ENCODE measurements at regions of chr12 and their contacts with region 1.

Region 1: DNA sequence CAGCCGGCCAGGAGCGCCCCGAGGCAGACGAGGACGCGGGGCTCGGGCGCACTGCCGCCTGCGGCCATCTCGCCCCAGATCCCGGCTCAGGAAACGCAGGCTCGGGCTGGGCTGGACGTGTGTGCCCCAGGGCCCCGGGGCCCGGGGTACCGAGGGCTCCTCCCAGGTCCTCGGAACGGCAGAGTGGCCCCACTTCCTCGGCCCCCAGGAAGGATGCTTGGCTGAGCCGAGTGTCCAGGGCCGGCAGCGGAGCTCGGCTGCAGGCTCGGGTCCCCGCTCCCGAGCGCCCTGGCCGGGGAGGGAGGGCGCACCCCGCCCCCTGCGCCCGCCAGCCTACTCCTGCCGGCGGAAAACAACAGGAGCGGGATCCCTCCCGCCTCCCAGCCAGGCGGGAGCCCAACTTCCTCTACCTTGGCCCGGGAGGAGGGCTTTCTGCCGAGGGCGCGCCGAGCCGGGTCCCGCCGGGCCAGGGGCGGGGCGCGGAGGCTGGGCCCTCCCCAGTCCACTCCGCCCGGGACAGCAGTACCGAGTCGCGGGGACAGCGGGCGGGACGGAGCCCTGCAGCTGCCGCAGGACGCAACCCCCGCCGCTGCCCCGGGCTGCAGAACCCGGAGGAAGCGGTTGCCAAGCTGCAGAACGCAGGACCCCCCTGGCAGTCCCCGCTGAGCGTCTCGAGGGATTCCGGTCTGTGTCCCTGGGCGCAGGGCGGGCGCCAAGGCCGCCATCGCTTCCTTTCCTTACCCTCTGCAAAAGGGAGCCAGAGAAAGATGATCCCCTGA is at the start of gene VSIG10:
- DNase-seq: peak; percentile 77 to 84
- ATAC-seq: peak; percentile 87 to 94 (median 88)
- H3K4me3 ChIP-seq: peak within 1 kb of the TSS; percentile 89
- H3K27ac ChIP-seq: peak within 1 kb of the TSS; percentile 81
- H3K4me1 ChIP-seq: peaks cover 12% of the 10 kb centered on the region
- H3K27me3 ChIP-seq: no peaks in the 10 kb centered on the region
- CTCF ChIP-seq: no peak
- total RNA-seq, gene VSIG10: 7.3 to 13.9 (median 10.8) TPM

Region 2: DNA sequence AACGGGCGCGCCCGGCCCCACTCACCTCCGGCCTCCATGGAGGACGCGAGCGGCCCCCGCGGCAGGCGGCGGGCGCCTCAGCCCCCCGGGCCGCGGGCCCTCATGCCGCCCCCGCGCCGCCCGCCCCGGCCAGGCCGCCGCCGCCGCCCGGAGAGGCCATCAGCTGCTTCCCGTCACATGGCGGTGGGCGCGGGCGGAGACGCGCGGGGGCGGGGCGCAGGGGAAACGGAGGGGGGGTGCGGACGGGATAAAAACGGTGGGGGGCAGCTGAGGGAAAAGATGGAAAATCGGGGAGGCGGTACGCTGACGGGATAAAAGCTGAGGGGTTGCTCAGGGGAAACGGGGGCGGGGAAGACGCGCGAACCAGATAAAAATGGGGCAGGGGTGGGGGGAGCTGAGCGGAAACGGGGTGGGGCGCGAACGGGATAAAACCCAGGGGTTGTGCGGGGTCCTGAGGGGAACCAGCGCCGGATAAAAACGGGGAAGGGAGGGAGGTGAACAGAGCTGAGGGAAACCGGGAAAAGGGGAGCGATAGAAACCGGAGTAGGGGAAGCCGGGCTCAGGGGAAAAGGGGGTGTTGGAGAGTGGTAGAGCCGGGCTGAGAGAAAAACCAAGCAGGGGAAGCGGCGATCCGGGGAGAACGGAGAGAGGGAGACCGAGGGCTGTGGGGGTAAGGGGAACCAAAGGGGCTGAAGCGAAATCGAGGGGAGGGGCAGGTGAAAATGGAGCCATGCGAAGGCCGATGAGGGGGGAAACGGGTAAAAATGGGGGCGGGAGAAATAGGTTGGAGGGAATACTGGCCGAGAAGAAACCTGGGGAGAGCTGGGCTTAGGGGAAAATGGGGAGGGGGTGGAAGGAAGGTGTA is 42.5 kb before region 1 on chr12 and contains the start of gene WSB2:
- intact Hi-C with region 1: loop called (anchors 5 kb)
- DNase-seq: peak; percentile 83
- ATAC-seq: peak; percentile 69 to 82 (median 77)
- H3K4me3 ChIP-seq: peak within 1 kb of the TSS; percentile 96
- H3K27ac ChIP-seq: peak within 1 kb of the TSS; percentile 98
- H3K4me1 ChIP-seq: peaks cover 21% of the 10 kb centered on the region
- H3K27me3 ChIP-seq: no peaks in the 10 kb centered on the region
- CTCF ChIP-seq: no peak
- total RNA-seq, gene WSB2: 74.4 to 96.4 (median 83.4) TPM

Region 3: GRCh38 chr12:118206107-118206412 is 102.3 kb after region 1 on chr12:
- intact Hi-C with region 1: no loop called
- DNase-seq: no peak
- ATAC-seq: no peak
- H3K4me3 ChIP-seq: no peak overlapping the region
- H3K27ac ChIP-seq: no peak overlapping the region
- H3K4me1 ChIP-seq: no peaks in the 10 kb centered on the region
- H3K27me3 ChIP-seq: no peaks in the 10 kb centered on the region
- CTCF ChIP-seq: no peak

Region 4: DNA sequence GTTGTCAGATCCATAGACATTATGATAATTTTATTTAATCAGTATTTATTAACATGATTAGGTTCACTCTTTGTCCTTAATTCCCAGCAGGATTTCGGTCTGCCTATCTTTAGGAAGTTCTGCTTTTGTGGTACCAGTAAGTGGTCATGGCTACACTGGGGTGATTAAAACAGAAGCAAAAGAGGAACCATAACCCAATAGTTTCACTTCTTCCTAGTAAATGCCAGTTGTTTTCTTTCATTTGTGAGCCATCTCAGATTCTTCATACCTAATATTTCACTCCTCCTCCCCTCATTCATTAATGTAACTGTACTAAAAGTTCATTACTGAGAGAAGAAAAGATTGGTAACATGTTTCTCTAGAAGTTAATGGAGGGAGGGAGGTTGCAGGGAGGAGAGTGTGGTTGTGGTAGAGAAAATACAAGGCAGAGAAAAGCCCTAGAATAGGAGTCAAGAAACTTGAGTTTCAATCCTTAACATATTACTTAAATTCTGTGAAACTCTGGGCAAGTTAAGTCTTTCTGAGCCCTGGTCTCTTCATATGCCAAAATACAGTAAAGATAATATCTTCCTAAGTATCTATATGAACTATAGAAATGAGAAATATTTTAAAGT is 133.4 kb after region 1 on chr12:
- intact Hi-C with region 1: no loop called
- DNase-seq: no peak
- ATAC-seq: no peak
- H3K4me3 ChIP-seq: no peak overlapping the region
- H3K27ac ChIP-seq: no peak overlapping the region
- H3K4me1 ChIP-seq: no peaks in the 10 kb centered on the region
- H3K27me3 ChIP-seq: no peaks in the 10 kb centered on the region
- CTCF ChIP-seq: no peak